Activated CD4-positive, alpha-beta T cell treated with anti-CD3 and anti-CD28 coated beads, Interleukin-2, amount 10 ng/mL, durations not matched to agents 24 days and 14 days (primary cell): ENCODE measurements at regions of chr13 and their contacts with region 1.

Region 1: GRCh38 chr13:48400850-48401291 is 12.0 kb downstream of the LPAR6 start:
- DNase-seq: no peak
- H3K4me3 Mint-ChIP-seq: peak overlapping the region; percentile 48
- H3K27ac Mint-ChIP-seq: peak overlapping the region; percentile 25
- H3K4me1 Mint-ChIP-seq: peaks cover 43% of the 10 kb centered on the region
- H3K27me3 Mint-ChIP-seq: no peaks in the 10 kb centered on the region

Region 2: GRCh38 chr13:48155848-48156247 is 245.0 kb before region 1 on chr13:
- intact Hi-C with region 1: loop called (anchors 1 kb)
- DNase-seq: peak; percentile 80
- H3K4me3 Mint-ChIP-seq: peak overlapping the region; percentile 44
- H3K27ac Mint-ChIP-seq: peak overlapping the region; percentile 87
- H3K4me1 Mint-ChIP-seq: peaks cover 59% of the 10 kb centered on the region
- H3K27me3 Mint-ChIP-seq: no peaks in the 10 kb centered on the region

Region 3: DNA sequence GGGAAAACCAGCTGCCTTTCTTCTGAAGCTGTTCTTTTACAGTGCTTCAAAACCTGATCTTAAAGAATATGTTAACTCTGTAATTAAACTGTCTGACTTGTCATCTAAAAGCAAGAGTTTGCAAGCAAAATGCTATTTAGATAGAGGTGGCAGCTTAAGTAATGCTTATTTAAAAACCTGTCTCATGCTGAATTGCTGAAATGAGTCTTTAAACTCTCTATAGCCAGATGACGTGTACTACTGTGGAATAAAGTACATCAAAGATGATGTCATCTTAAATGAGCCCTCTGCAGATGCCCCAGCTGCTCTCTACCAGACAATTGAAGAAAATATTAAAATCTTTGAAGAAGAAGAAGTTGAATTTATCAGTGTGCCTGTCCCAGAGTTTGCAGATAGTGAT is 144.9 kb before region 1 on chr13:
- intact Hi-C with region 1: no loop called
- DNase-seq: no peak
- H3K4me3 Mint-ChIP-seq: no peak overlapping the region
- H3K27ac Mint-ChIP-seq: no peak overlapping the region
- H3K4me1 Mint-ChIP-seq: peaks cover 4% of the 10 kb centered on the region
- H3K27me3 Mint-ChIP-seq: no peaks in the 10 kb centered on the region

Region 4: DNA sequence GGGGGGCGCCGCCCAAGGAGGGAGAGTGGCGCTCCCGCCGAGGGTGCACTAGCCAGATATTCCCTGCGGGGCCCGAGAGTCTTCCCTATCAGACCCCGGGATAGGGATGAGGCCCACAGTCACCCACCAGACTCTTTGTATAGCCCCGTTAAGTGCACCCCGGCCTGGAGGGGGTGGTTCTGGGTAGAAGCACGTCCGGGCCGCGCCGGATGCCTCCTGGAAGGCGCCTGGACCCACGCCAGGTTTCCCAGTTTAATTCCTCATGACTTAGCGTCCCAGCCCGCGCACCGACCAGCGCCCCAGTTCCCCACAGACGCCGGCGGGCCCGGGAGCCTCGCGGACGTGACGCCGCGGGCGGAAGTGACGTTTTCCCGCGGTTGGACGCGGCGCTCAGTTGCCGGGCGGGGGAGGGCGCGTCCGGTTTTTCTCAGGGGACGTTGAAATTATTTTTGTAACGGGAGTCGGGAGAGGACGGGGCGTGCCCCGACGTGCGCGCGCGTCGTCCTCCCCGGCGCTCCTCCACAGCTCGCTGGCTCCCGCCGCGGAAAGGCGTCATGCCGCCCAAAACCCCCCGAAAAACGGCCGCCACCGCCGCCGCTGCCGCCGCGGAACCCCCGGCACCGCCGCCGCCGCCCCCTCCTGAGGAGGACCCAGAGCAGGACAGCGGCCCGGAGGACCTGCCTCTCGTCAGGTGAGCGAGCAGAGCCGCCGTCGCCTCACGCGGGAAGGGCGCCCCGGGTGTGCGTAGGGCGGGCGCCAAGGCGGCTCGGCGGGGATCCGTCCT is 97.3 kb before region 1 on chr13 and contains the start of gene RB1:
- intact Hi-C with region 1: loop called (anchors 1 kb)
- DNase-seq: peak; percentile 97
- H3K4me3 Mint-ChIP-seq: peak within 1 kb of the TSS; percentile 87
- H3K27ac Mint-ChIP-seq: peak within 1 kb of the TSS; percentile 98
- H3K4me1 Mint-ChIP-seq: peaks cover 21% of the 10 kb centered on the region
- H3K27me3 Mint-ChIP-seq: no peaks in the 10 kb centered on the region
- total RNA-seq, gene RB1: 27.3 and 29.0 TPM in 2 replicates

Region 5: DNA sequence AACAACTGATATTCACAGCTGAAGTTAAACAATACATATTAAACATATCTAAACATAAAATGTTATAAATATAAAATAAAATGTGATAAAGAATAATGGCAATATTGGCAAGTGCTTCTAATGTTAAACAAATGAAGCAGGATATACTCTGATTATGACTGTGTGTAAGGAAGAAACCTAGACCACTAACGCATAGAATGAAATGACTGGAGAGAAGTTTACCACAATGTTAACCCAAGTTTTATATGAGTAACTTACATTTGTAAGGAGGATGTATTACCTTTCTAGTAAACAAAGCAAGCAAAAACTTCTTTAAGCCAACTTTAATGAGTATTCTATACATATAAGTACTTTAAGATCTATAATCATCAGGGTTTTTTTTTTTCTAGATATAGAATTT is 54.3 kb before region 1 on chr13:
- intact Hi-C with region 1: loop called (anchors 5 kb)
- DNase-seq: no peak
- H3K4me3 Mint-ChIP-seq: no peak overlapping the region
- H3K27ac Mint-ChIP-seq: no peak overlapping the region
- H3K4me1 Mint-ChIP-seq: peaks cover 8% of the 10 kb centered on the region
- H3K27me3 Mint-ChIP-seq: no peaks in the 10 kb centered on the region

Region 6: GRCh38 chr13:48492470-48493065 is 91.7 kb after region 1 on chr13:
- intact Hi-C with region 1: loop called (anchors 2 kb)
- DNase-seq: peak; percentile 91
- H3K4me3 Mint-ChIP-seq: no peak overlapping the region
- H3K27ac Mint-ChIP-seq: no peak overlapping the region
- H3K4me1 Mint-ChIP-seq: peaks cover 47% of the 10 kb centered on the region
- H3K27me3 Mint-ChIP-seq: no peaks in the 10 kb centered on the region

Region 7: GRCh38 chr13:48532506-48533499 is 131.9 kb after region 1 on chr13 and contains the start of gene RCBTB2:
- intact Hi-C with region 1: loop called (anchors 2 kb)
- DNase-seq: peak; percentile 100
- H3K4me3 Mint-ChIP-seq: peak within 1 kb of the TSS; percentile 87
- H3K27ac Mint-ChIP-seq: peak within 1 kb of the TSS; percentile 96
- H3K4me1 Mint-ChIP-seq: peaks cover 26% of the 10 kb centered on the region
- H3K27me3 Mint-ChIP-seq: peaks cover 15% of the 10 kb centered on the region
- total RNA-seq, gene RCBTB2: 1.6 and 1.7 TPM in 2 replicates

Region 8: GRCh38 chr13:48580185-48580803 is 179.4 kb after region 1 on chr13:
- intact Hi-C with region 1: loop called (anchors 2 kb)
- DNase-seq: peak; percentile 91
- H3K4me3 Mint-ChIP-seq: no peak overlapping the region
- H3K27ac Mint-ChIP-seq: no peak overlapping the region
- H3K4me1 Mint-ChIP-seq: peaks cover 12% of the 10 kb centered on the region
- H3K27me3 Mint-ChIP-seq: peaks cover 70% of the 10 kb centered on the region